ENCODE measurements at regions of chr22 and their contacts with region 1.

Region 1: DNA sequence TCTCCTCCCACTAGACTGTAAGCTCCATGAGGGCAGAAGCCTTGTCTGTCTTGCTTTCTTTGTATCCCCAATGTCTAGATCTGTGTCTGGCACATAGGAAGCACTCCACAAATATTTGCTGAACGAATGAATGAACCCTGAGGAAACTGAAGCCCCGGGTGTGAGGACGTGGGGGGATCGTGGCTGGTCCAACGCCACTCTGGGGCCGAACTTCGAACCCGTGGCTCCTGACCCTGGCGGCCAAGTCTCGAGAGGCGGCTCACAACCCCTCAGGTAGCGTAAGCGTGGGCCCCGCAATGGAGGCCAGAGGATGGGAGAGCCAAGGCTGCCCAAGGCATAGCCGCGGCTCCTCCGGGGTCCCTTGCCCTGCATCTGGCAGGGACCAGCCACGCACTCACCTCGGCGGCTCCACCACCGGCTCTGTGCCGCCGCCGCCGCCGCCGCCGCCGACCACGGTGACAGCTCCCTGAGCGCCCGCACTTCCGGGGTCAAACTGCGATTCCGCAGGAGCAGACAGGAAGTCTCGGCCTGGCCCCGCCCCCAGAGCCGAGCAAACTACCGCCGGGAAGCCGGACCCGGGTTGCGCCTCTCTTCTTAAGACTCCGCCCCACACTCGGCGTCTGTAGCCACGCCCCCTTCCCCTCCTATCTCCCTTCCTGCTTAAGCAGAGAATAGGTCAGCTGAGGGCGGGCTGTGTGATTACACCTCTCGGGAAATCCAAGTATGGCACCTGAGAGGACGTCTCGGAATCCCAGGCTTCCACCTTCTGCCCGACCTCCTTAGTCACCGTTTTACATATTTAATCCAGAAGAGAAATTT is at the start of gene ASCC2:
- DNase-seq: peak; percentile 97 to 100 (median 99)
- ATAC-seq: peak; percentile 97
- H3K4me3 ChIP-seq: peak within 1 kb of the TSS; percentile 72
- H3K4me3 Mint-ChIP-seq: peak within 1 kb of the TSS; percentile 94
- H3K27ac ChIP-seq: peak within 1 kb of the TSS; percentile 75 to 88
- H3K27ac Mint-ChIP-seq: peak within 1 kb of the TSS; percentile 94
- H3K4me1 ChIP-seq: peaks cover 27% of the 10 kb centered on the region
- H3K4me1 Mint-ChIP-seq: peaks cover 50% of the 10 kb centered on the region
- H3K27me3 ChIP-seq: no peaks in the 10 kb centered on the region
- H3K27me3 Mint-ChIP-seq: no peaks in the 10 kb centered on the region
- CTCF ChIP-seq: no peak
- total RNA-seq, gene ASCC2: 67.1 to 68.3 TPM

Region 2: DNA sequence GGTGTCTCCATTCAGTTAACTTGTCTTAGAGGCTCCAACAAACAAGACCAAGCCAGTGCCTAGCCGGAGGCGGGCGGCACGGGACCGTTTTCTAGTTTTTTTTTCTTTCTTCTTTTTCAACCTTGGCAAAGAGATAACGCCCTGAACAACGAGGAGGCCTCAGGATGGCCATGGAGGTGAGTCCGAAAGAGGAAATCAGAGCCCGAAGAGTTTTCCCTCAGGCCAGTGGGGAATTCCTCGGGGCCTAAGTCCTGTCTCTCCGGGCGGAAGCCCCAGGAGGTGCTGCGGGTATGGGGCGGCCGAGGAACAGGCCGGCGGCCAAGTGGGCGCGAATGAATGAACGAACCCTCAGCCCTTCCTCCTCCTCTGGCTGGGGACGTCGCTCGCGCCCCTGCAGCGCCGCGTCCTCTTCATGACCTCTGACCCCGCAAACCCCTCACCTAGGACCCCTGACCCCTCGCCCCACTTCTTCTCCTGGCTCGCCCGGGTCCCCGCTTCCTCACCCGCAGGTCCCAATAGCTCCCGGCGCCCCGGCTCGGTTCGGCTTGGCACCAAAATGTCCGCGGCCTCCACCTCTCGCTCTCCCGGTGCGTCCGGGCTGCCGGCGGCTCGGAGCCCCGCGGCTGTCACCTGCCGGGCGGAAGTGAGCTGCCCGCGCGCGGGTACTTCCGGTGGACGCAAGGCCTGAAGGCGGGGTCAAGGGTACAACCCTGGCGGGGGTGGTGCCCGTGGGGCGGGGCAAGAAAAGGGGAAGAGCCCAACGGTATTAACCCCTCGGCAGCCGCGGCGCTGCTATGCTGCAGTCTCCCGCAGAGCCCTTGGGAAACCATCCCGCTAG is 449.8 kb before region 1 on chr22 and contains the start of gene AP1B1:
- CTCF ChIA-PET with region 1: no interaction called
- POLR2A ChIA-PET with region 1: no interaction called
- intact Hi-C with region 1: loop called in 1 of 2 experiments (anchors 5 kb)
- DNase-seq: peak; percentile 79 to 96 (median 92)
- ATAC-seq: peak; percentile 91
- H3K4me3 ChIP-seq: peak within 1 kb of the TSS; percentile 91
- H3K4me3 Mint-ChIP-seq: peak within 1 kb of the TSS; percentile 96
- H3K27ac ChIP-seq: peak within 1 kb of the TSS; percentile 58 to 80
- H3K27ac Mint-ChIP-seq: peak within 1 kb of the TSS; percentile 85
- H3K4me1 ChIP-seq: peaks cover 48% of the 10 kb centered on the region
- H3K4me1 Mint-ChIP-seq: peaks cover 52% of the 10 kb centered on the region
- H3K27me3 ChIP-seq: no peaks in the 10 kb centered on the region
- H3K27me3 Mint-ChIP-seq: no peaks in the 10 kb centered on the region
- CTCF ChIP-seq: no peak
- total RNA-seq, gene AP1B1: 25.6 to 26.4 TPM

Region 3: GRCh38 chr22:29883045-29883774 is 45.2 kb after region 1 on chr22 and contains the start of gene MTMR3:
- CTCF ChIA-PET with region 1: no interaction called
- POLR2A ChIA-PET with region 1: interaction called, 10 read pairs
- intact Hi-C with region 1: loop called (anchors 1 kb)
- DNase-seq: peak; percentile 69 to 96 (median 91)
- ATAC-seq: peak; percentile 75
- H3K4me3 ChIP-seq: peak within 1 kb of the TSS; percentile 96
- H3K4me3 Mint-ChIP-seq: peak within 1 kb of the TSS; percentile 96
- H3K27ac ChIP-seq: peak within 1 kb of the TSS; percentile 15 to 75
- H3K27ac Mint-ChIP-seq: peak within 1 kb of the TSS; percentile 87
- H3K4me1 ChIP-seq: peaks cover 22% of the 10 kb centered on the region
- H3K4me1 Mint-ChIP-seq: peaks cover 2% of the 10 kb centered on the region
- H3K27me3 ChIP-seq: no peaks in the 10 kb centered on the region
- H3K27me3 Mint-ChIP-seq: no peaks in the 10 kb centered on the region
- CTCF ChIP-seq: peak; percentile 51
- total RNA-seq, gene MTMR3: 57.8 to 60.6 TPM

Region 4: DNA sequence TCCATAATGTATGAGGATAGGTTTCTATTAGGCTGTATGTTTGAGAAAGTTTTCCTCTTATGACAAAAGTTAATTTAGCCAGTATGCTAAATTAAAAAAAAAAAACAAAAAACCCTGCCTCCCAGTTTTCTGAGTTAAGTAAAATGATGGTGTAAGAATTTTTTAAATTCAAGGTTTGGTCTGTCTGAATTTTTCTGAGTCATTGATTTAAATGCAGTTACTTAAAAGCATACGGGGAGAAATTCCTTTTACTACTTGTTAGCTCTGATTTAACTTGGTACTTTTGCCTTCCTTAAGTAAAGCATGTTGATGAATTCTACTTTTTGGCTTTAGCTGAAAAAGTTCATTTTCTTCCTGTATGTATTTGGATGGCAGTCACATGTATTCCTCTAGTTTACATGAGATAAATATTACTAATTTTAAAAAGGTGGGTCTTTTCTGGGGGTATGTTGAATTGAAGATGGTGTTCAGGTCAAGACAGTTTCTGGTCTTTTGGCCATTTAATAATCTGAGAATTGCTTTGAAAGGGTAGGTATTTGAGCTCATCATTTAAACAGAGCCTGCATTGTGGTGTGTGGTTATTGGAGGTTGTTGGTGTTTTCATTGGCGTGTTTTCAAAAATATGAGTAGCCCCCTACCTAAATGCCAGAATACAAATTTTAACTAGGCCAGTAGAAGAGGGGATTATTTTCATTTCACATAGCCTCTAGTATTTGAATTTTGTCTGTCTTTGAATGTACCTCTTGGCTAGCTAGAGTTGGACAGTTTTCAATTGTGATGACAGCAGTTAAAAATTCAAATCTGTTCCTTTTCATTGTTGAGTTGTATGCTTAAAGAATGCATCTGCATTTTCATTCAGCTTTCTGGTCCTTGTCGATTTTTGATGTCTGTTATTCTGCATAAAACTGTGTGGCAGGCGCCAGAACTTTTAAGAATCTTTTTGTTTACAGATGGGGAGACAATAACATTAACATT is 109.7 kb after region 1 on chr22:
- CTCF ChIA-PET with region 1: no interaction called
- POLR2A ChIA-PET with region 1: no interaction called
- intact Hi-C with region 1: loop called in 1 of 2 experiments (anchors 5 kb)
- DNase-seq: no peak
- ATAC-seq: no peak
- H3K4me3 ChIP-seq: no peak overlapping the region
- H3K4me3 Mint-ChIP-seq: no peak overlapping the region
- H3K27ac ChIP-seq: no peak overlapping the region
- H3K27ac Mint-ChIP-seq: no peak overlapping the region
- H3K4me1 ChIP-seq: peaks cover 12% of the 10 kb centered on the region
- H3K4me1 Mint-ChIP-seq: peaks cover 82% of the 10 kb centered on the region
- H3K27me3 ChIP-seq: no peaks in the 10 kb centered on the region
- H3K27me3 Mint-ChIP-seq: no peaks in the 10 kb centered on the region
- CTCF ChIP-seq: no peak

Region 5: DNA sequence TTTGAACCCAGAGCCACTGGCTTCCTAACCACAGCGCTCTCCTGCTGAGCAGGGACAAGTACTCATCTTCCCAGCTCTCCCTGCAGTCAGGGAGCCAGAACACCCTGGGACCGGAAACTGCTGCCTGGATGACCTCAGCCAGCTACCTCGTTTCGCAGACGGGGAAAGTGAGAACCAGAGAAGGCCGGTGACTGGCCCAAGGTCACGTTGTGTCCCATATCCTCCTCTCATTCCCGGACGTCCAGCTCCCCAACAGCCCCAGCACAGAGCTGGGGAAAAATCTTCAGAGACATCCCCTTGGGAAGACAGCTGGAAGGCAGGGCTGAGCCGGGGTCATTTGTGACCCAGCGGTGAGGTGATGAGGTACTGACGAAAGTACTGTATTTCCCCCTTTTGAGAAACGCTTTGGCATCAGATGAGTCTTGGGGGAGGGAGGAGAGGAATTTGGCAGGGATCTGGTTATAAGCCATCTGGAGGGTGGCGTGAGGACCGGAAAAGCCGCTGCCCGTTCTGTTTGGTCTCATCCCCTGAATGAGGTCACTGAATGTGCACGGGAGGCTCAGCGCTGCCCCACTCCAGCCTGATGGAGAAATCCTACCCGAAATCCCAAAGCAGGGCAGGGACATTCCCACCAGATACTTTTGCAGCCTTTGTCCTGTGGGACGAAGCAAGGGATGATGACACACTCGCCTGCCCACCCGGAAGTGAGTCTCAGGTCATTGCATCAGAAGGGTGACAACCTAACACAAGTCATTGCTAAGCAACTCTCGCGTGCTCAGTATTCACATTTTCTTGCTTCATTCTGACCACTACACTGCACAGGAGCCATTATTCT is 367.5 kb after region 1 on chr22:
- CTCF ChIA-PET with region 1: no interaction called
- POLR2A ChIA-PET with region 1: no interaction called
- intact Hi-C with region 1: no loop called
- DNase-seq: peak in 2 of 14 experiments; percentile 49 to 58
- ATAC-seq: no peak
- H3K4me3 ChIP-seq: no peak overlapping the region
- H3K4me3 Mint-ChIP-seq: no peak overlapping the region
- H3K27ac ChIP-seq: no peak overlapping the region
- H3K27ac Mint-ChIP-seq: no peak overlapping the region
- H3K4me1 ChIP-seq: no peaks in the 10 kb centered on the region
- H3K4me1 Mint-ChIP-seq: no peaks in the 10 kb centered on the region
- H3K27me3 ChIP-seq: no peaks in the 10 kb centered on the region
- H3K27me3 Mint-ChIP-seq: no peaks in the 10 kb centered on the region
- CTCF ChIP-seq: no peak